Activated CD8-positive, alpha-beta memory T cell treated with anti-CD3 and anti-CD28 coated beads, Interleukin-2, amount 10 ng/mL, durations not matched to agents 7 days and 5 days (primary cell): ENCODE measurements at regions of chr5 and their contacts with region 1.

Region 1: GRCh38 chr5:132064738-132065331 is 4.4 kb downstream of the IL3 start:
- DNase-seq: peak; percentile 89
- ATAC-seq: peak; percentile 80
- H3K4me3 Mint-ChIP-seq: no peak overlapping the region
- H3K27ac Mint-ChIP-seq: no peak overlapping the region
- H3K4me1 Mint-ChIP-seq: peaks cover 48% of the 10 kb centered on the region
- H3K27me3 Mint-ChIP-seq: no peaks in the 10 kb centered on the region

Region 2: DNA sequence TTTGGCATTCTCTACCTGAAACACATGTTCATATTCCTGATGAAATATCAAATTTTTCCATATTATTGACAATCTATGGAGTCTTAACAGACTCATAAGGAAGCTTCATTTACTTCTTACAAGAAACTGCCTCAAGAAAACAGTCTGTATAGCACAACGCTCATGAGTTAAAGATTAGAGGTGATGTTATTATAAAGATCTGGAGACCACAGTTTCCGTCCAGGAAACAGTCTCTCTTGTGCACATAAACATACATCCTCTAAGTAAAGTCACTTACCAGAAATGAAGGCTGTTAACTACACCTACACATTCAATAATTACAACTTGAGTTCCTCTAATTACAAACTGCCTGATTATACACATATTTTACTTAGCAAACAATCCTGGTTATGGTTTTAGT is 516.7 kb before region 1 on chr5:
- CTCF ChIA-PET with region 1: no interaction called
- DNase-seq: no peak
- ATAC-seq: peak; percentile 98
- H3K4me3 Mint-ChIP-seq: peak overlapping the region; percentile 73
- H3K27ac Mint-ChIP-seq: peak overlapping the region; percentile 92
- H3K4me1 Mint-ChIP-seq: peaks cover 56% of the 10 kb centered on the region
- H3K27me3 Mint-ChIP-seq: no peaks in the 10 kb centered on the region

Region 3: DNA sequence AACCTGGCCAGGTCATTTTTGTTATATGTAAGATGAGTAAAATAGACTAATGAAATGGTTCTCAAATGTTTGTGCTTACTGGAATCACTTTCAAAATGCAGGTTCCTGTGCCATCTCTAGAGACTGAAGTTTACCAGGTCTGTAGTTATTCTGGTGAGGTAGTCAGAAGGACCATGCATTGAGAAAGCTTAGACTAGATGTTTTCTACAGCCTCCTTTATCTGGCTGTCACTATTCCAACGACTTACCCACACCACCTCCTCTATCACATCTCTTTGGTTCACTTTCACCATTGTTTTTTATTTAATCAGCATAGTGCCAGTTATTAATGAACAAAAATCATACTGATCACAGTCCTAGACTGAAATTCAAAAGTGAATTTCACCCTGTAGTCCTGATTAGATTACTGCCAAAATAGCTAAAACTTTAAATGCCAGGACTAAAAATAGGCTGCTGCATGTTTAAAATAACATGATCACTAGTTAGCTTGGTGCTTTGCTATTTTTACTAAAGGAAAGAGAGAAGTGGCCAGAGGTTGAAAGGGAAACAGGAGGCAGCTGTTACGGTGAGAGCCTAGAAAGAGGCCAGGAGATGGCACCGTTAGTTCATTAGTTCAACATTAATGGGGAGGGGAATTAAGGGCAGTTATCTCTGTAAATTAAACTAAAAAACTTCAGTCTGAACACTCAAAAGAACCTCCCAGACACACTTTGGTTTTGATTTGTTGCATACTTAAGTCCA is 254.2 kb before region 1 on chr5:
- CTCF ChIA-PET with region 1: interaction called, 21 read pairs
- DNase-seq: no peak
- ATAC-seq: peak; percentile 33
- H3K4me3 Mint-ChIP-seq: no peak overlapping the region
- H3K27ac Mint-ChIP-seq: no peak overlapping the region
- H3K4me1 Mint-ChIP-seq: no peaks in the 10 kb centered on the region
- H3K27me3 Mint-ChIP-seq: peaks cover 3% of the 10 kb centered on the region

Region 4: DNA sequence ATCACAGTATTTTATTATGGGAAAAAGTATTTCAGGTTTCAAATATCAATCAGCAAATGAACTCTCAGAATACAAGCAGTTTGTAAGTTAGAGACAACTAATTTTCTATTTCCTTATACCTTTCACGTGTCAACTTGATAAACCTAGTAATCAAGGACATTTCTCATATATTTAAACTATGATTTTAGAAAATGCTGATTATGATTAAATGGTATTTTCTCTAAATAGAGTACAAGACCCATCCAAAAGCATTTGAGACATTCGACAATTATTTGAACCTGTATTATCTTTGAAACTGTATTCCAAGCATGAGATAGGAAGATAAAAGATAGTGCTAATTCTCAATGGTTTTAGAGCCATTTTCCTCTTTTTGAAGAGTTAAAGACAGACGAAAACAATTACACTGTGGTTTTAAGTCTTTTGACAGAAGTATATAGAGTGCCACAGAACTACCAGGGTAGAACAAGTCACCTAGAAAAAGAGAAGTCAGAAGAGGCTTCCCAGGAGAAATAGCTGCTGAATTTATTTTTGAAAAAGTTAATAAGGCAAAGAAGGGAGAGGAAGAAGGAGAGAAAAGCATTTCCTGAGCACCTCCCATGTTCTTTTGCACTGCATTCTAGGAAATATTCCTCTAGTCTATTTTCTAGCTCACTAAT is 125.0 kb before region 1 on chr5:
- CTCF ChIA-PET with region 1: no interaction called
- DNase-seq: no peak
- ATAC-seq: no peak
- H3K4me3 Mint-ChIP-seq: no peak overlapping the region
- H3K27ac Mint-ChIP-seq: no peak overlapping the region
- H3K4me1 Mint-ChIP-seq: no peaks in the 10 kb centered on the region
- H3K27me3 Mint-ChIP-seq: peaks cover 8% of the 10 kb centered on the region

Region 5: DNA sequence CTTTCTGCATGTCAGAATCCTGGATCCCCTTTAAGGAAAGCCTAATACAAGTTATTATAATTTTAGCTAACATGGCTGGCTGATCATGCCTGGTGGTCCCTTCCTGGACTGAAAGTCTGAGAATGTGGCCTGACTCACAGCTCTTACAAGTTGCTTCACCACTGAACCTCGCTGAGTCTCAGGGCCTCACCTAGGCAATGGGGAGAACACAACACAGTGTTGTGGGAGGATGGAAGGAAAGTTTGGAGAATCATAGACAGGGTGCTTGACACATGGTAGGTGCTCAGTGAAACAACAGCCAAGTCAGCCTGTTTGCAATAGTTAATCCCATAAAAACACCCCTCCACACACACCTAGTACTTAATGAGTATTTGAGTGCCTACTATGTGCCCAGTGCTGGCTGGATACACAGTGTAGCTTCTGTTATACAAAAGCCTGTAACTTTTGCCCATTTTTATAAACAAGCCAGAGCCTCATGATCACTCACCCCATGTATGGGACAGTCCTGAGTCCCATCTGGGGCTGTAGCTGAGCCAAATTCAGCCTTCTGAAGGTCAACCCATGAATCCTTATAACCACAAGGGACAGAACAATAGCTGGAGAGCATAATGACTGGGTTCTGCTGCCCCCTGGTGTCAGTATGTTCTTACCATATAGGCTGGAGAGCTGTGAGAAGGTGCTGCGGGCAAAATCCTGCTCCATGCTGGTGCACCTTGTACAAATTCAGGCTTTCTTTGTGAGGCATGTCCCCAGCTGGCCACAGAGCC is 57.3 kb before region 1 on chr5:
- CTCF ChIA-PET with region 1: interaction called, 72 read pairs
- DNase-seq: peak; percentile 87
- ATAC-seq: peak; percentile 71
- H3K4me3 Mint-ChIP-seq: no peak overlapping the region
- H3K27ac Mint-ChIP-seq: no peak overlapping the region
- H3K4me1 Mint-ChIP-seq: peaks cover 21% of the 10 kb centered on the region
- H3K27me3 Mint-ChIP-seq: peaks cover 31% of the 10 kb centered on the region

Region 6: DNA sequence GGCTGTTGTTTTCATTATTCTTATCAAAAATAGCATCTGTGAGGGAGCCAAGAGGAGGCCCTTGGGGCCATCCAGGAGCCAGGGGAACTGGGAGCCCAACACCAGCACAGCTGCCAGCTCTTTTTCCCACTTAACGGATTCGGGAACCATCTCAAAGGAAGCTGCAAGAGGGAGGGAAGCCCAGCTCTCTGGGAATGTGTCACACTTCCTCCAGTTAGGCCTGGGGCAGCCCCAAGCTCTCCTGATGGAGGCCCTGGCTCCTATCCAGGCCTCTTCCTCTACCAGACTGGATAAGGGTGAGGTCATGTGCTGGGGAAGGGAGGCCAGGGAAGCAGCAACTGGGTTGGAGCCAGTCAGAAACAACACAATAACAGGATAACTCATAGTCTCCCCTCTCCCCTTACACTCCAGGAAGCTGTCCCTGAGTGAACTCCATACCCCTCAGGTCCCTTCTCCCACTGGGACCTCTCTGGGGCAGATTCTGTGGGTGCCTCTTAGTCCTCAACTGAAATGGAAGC is 21.5 kb after region 1 on chr5:
- CTCF ChIA-PET with region 1: interaction called, 11 read pairs
- DNase-seq: no peak
- ATAC-seq: no peak
- H3K4me3 Mint-ChIP-seq: no peak overlapping the region
- H3K27ac Mint-ChIP-seq: no peak overlapping the region
- H3K4me1 Mint-ChIP-seq: peaks cover 53% of the 10 kb centered on the region
- H3K27me3 Mint-ChIP-seq: no peaks in the 10 kb centered on the region

Region 7: DNA sequence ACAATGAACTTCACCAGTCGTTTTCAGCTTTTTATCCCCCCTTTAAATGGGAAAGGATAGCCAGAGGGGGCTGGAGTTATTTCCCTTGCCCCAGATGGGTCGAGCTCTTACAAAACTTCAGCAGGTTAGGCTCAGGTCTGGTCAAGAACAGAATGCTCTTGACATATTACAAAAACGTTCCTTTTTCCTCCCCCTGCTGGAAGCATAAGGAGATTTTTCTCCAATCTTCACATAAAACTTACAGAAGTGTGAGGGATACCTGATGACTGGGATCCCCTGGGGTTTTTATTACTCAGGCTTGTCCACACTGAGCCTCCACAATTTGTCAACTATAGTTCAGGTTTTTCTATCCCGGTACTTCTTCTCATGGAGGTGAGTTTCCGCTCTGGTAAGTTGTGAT is 69.5 kb after region 1 on chr5:
- CTCF ChIA-PET with region 1: interaction called, 21 read pairs
- DNase-seq: no peak
- ATAC-seq: no peak
- H3K4me3 Mint-ChIP-seq: no peak overlapping the region
- H3K27ac Mint-ChIP-seq: no peak overlapping the region
- H3K4me1 Mint-ChIP-seq: peaks cover 2% of the 10 kb centered on the region
- H3K27me3 Mint-ChIP-seq: peaks cover 2% of the 10 kb centered on the region

Region 8: GRCh38 chr5:132238169-132238744 is 173.4 kb after region 1 on chr5:
- CTCF ChIA-PET with region 1: interaction called, 16 read pairs
- DNase-seq: peak; percentile 86
- ATAC-seq: peak; percentile 83
- H3K4me3 Mint-ChIP-seq: no peak overlapping the region
- H3K27ac Mint-ChIP-seq: no peak overlapping the region
- H3K4me1 Mint-ChIP-seq: peaks cover 2% of the 10 kb centered on the region
- H3K27me3 Mint-ChIP-seq: peaks cover 3% of the 10 kb centered on the region